PC-9 (cell line): ENCODE measurements at regions of chr12 and their contacts with region 1.

Region 1: GRCh38 chr12:18383203-18383602 is 121.9 kb downstream of the PIK3C2G start:
- DNase-seq: peak; percentile 37 to 64
- H3K4me3 ChIP-seq: no peak overlapping the region
- H3K27ac ChIP-seq: peak overlapping the region; percentile 45
- H3K4me1 ChIP-seq: peaks cover 13% of the 10 kb centered on the region; the same call in 1 of the 2 replicates
- H3K27me3 ChIP-seq: no peaks in the 10 kb centered on the region
- CTCF ChIP-seq: no peak

Region 2: GRCh38 chr12:18400186-18400585 is 17.0 kb after region 1 on chr12:
- CTCF ChIA-PET with region 1: no interaction called
- POLR2A ChIA-PET with region 1: interaction called, 10 read pairs
- intact Hi-C with region 1: no loop called
- DNase-seq: no peak
- H3K4me3 ChIP-seq: no peak overlapping the region
- H3K27ac ChIP-seq: no peak overlapping the region
- H3K4me1 ChIP-seq: no peaks in the 10 kb centered on the region
- H3K27me3 ChIP-seq: no peaks in the 10 kb centered on the region
- CTCF ChIP-seq: no peak